ENCODE measurements at regions of chr10 and their contacts with region 1.

Region 1: GRCh38 chr10:131997366-131998049 is 15.8 kb upstream of the BNIP3 start:
- DNase-seq: peak; percentile 87
- H3K4me3 Mint-ChIP-seq: peak overlapping the region; percentile 54
- H3K27ac Mint-ChIP-seq: peak overlapping the region; percentile 97
- H3K4me1 Mint-ChIP-seq: peaks cover 25% of the 10 kb centered on the region
- H3K27me3 Mint-ChIP-seq: no peaks in the 10 kb centered on the region
- CTCF ChIP-seq: no peak

Region 2: DNA sequence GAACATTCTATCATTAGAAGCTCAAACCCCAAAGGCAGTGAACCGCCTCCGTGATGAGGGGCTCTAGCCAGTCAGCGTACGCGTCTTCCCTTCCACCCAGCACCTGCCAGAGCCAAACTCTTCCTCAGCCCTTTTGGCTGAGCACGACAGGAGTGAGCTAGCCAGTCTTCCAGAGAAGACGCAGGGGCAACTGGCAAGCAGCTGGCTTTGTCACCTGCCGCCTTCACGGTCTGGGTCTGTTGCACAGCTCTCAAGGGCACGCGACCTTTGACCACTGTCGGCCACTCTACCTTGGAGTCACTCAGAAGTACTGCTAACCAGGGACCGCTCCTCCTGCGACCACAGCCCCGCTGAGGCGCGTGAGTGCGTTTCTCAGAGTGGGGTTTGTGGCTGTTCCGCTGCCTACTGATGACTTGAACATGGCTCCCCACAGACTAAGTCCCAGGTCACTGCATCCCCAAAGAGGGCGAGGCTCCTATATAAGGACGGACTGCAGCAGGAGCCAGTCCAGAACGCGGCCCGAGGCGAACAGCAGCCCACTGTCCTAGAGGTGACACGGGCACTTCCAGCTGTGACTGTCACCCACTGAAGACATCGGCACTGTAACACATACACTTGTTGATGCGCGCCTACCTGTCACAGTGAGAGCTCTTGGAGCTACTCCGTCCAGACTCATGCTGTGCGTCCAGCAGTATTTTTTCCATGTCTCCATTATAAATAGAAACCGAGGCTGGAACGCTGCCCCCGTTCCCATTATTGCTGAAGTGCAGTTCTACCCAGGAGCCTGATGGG is 24.2 kb before region 1 on chr10:
- CTCF ChIA-PET with region 1: interaction called, 3 read pairs
- POLR2A ChIA-PET with region 1: interaction called, 10 read pairs
- intact Hi-C with region 1: no loop called
- DNase-seq: no peak
- H3K4me3 Mint-ChIP-seq: no peak overlapping the region
- H3K27ac Mint-ChIP-seq: no peak overlapping the region
- H3K4me1 Mint-ChIP-seq: no peaks in the 10 kb centered on the region
- H3K27me3 Mint-ChIP-seq: no peaks in the 10 kb centered on the region
- CTCF ChIP-seq: no peak

Region 3: GRCh38 chr10:131981429-131982184 is 15.9 kb before region 1 on chr10 and contains the start of gene BNIP3:
- CTCF ChIA-PET with region 1: interaction called, 6 read pairs
- POLR2A ChIA-PET with region 1: interaction called, 23 read pairs
- intact Hi-C with region 1: no loop called
- DNase-seq: peak; percentile 91
- H3K4me3 Mint-ChIP-seq: peak within 1 kb of the TSS; percentile 82
- H3K27ac Mint-ChIP-seq: peak within 1 kb of the TSS; percentile 75
- H3K4me1 Mint-ChIP-seq: peaks cover 18% of the 10 kb centered on the region
- H3K27me3 Mint-ChIP-seq: no peaks in the 10 kb centered on the region
- CTCF ChIP-seq: no peak
- total RNA-seq, gene BNIP3: 47.0 and 53.0 TPM in 2 replicates

Measured in MCF 10A (cell line).